Dorsolateral prefrontal cortex (tissue), 120 donors: ENCODE measurements at regions of chr9 and their contacts with region 1.

Region 1: GRCh38 chr9:110058304-110058953 is 149.5 kb downstream of the C9orf152 start:
- DNase-seq: peak in 2 of 10 donors; percentile 11 to 50
- H3K4me3 ChIP-seq: no peak overlapping the region
- H3K27ac ChIP-seq: no peak overlapping the region
- H3K27me3 ChIP-seq: no peaks in the 10 kb centered on the region
- CTCF ChIP-seq: peak in 53 of 56 donors; percentile 16 to 70 (median 47)

Region 2: GRCh38 chr9:109132567-109133021 is 925.8 kb before region 1 on chr9:
- intact Hi-C with region 1: no loop called
- DNase-seq: no peak
- H3K4me3 ChIP-seq: no peak overlapping the region
- H3K27ac ChIP-seq: no peak overlapping the region
- H3K27me3 ChIP-seq: no peaks in the 10 kb centered on the region
- CTCF ChIP-seq: no peak

Region 3: DNA sequence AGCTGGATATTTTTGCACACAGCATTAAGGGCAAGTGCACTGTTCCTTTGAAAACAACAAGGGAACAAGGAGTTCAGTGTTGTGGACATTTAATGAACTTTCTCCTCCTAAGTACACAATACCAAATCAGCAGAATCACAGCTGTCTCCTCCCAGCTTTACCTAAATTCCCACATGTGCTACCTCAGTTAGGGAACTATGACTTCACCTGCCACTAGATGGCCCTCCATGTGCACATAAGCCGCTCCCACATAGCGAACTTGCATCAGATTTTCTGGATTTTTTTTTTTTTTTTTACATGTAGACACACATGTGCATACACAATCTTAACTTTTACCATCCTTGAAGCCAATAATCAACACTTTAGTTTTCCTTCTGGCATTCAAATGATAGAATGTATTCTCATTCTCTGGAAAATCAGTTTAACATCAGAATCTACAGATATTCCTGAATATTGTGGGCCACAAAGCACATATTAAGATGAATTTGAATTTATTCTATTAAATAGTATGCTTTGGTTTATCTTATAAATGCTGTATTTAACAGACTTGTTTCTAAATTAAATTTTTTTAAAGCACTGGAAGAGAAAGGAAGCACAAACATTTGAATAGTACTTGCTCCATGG is 154.8 kb before region 1 on chr9:
- intact Hi-C with region 1: loop called (anchors 2 to 10 kb)
- DNase-seq: peak in 5 of 10 donors; percentile 34 to 70 (median 53)
- H3K4me3 ChIP-seq: no peak overlapping the region
- H3K27ac ChIP-seq: peak overlapping the region in 11 of 59 donors; percentile 2 to 57 (median 25)
- H3K27me3 ChIP-seq: no peaks in the 10 kb centered on the region
- CTCF ChIP-seq: peak; percentile 54 to 94 (median 82)

Region 4: GRCh38 chr9:109989296-109989695 is 69.1 kb before region 1 on chr9:
- intact Hi-C with region 1: no loop called
- DNase-seq: no peak
- H3K4me3 ChIP-seq: no peak overlapping the region
- H3K27ac ChIP-seq: no peak overlapping the region
- H3K27me3 ChIP-seq: no peaks in the 10 kb centered on the region
- CTCF ChIP-seq: no peak